Gastrocnemius medialis (tissue), 4 donors: ENCODE measurements at regions of chr3 and their contacts with region 1.

Region 1: GRCh38 chr3:127959846-127960245 is 44.8 kb downstream of the KBTBD12 start:
- DNase-seq: no peak
- ATAC-seq: no peak
- H3K4me3 ChIP-seq: no peak overlapping the region
- H3K27ac ChIP-seq: no peak overlapping the region
- H3K4me1 ChIP-seq: peaks cover 24 to 30% of the 10 kb centered on the region in 2 donors
- H3K27me3 ChIP-seq: no peaks in the 10 kb centered on the region
- CTCF ChIP-seq: no peak
- POLR2A ChIP-seq: no peak

Region 2: DNA sequence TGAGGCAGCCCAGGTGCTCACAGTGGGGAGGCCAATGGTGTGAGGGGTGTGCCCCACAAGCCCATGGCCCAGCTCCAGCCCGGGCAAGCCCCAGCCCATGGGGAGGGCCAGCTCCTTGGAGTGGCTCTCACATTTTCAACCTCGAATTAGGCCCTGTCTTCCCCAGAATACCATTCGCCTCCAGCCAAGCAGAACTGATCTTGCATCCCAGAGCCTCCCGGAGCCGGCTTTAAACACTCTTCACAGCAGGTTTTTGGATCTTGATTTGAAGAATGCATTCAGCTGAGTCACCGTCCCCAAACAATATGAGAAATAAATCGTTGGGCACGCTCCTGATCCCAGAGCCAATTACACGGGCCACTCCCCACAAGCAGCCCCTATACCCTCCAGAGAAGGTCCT is 393.0 kb before region 1 on chr3:
- in situ Hi-C with region 1: no loop called
- intact Hi-C with region 1: no loop called
- DNase-seq: no peak
- ATAC-seq: no peak
- H3K4me3 ChIP-seq: no peak overlapping the region
- H3K27ac ChIP-seq: no peak overlapping the region
- H3K4me1 ChIP-seq: no peaks in the 10 kb centered on the region
- H3K27me3 ChIP-seq: peaks cover 0 to 12% (median 0%) of the 10 kb centered on the region in 3 donors
- CTCF ChIP-seq: no peak
- POLR2A ChIP-seq: no peak

Region 3: DNA sequence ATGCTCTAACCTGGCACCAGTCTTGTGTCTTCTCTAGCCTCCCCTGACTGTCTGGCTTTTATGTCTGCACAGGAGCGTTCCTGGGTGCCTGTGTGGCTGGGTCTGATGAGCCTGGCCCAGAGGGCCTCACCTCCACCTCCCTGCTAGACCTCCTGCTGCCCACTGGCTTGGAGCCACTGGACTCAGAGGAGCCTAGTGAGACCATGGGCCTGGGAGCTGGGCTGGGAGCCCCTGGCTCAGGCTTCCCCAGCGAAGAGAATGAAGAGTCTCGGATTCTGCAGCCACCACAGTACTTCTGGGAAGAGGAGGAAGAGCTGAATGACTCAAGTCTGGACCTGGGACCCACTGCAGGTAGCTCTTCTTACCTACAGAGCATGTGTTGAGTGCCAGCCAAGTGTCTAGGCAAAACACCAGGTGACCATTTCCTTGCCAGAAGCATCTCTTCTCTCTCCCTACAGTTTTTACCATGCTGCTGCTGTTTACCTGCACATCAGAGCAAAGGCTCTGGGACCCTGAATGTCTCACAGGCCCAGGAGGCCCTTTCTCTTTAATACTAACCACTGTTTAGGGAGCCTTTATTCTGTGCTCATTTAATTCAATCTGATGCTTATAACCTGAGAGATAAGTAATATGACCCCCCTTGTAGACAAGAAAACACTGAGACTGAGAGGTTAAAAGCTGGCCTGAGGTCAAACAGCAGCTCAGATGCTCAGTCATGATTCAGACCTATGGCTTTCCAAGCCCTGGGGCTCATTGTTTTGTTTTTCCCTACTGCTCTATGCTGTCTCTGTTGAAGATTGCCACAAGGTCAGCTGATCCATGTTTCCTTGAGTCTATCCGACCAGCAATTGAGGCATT is 320.4 kb before region 1 on chr3:
- in situ Hi-C with region 1: loop called in 1 of 4 experiments (anchors 10 kb)
- intact Hi-C with region 1: no loop called
- DNase-seq: no peak
- ATAC-seq: no peak
- H3K4me3 ChIP-seq: no peak overlapping the region
- H3K27ac ChIP-seq: no peak overlapping the region
- H3K4me1 ChIP-seq: no peaks in the 10 kb centered on the region
- H3K27me3 ChIP-seq: no peaks in the 10 kb centered on the region
- CTCF ChIP-seq: no peak
- POLR2A ChIP-seq: no peak

Region 4: GRCh38 chr3:127652231-127652995 is 307.4 kb before region 1 on chr3:
- in situ Hi-C with region 1: loop called in 3 of 4 experiments (anchors 10 to 25 kb)
- intact Hi-C with region 1: no loop called
- DNase-seq: no peak
- ATAC-seq: peak; percentile 78 to 89
- H3K4me3 ChIP-seq: no peak overlapping the region
- H3K27ac ChIP-seq: no peak overlapping the region
- H3K4me1 ChIP-seq: peaks cover 0 to 5% of the 10 kb centered on the region in 2 donors
- H3K27me3 ChIP-seq: no peaks in the 10 kb centered on the region
- CTCF ChIP-seq: peak; percentile 87 to 97 (median 90)
- POLR2A ChIP-seq: no peak

Region 5: DNA sequence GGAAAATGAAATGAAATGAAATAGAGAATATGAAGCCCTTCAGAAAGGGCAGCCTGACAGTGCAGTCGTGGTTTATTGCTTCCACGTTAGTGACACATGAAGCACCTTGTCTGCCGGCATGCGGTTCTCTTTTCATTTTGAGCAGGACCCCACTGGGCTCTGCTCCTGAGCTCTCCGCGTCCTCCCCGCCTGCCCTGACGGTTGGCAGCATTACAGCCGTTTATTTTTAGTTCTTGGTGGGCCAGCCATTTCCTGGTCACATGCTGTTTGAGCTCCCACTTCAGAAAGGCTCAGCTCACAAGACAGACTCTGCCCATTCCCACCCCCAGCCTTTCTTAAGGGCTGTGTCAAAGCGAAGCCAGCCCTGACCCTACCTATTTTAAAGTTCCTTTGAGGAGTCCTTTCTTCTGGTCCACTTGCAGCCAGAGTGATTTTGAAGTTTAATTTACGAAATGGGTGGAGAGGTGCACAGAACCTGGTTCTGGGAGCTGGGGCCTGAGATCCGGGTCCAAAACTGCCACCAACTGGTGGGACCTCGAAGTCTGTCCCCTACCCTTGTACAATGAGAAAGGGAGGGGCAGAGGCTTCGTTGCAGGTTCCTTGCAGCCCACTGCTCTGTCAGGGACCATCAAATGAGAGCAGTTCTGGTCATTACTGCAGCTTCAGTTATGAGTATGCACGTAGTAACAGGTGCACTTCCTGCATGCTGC is 197.6 kb before region 1 on chr3:
- in situ Hi-C with region 1: no loop called
- intact Hi-C with region 1: loop called (anchors 10 kb)
- DNase-seq: peak in 1 of 2 donors; percentile 73
- ATAC-seq: peak; percentile 17 to 69
- H3K4me3 ChIP-seq: peak overlapping the region in 3 of 4 donors; percentile 24 to 39 (median 26)
- H3K27ac ChIP-seq: peak overlapping the region; percentile 73 to 78 (median 75)
- H3K4me1 ChIP-seq: peaks cover 42 to 52% of the 10 kb centered on the region in 2 donors
- H3K27me3 ChIP-seq: no peaks in the 10 kb centered on the region
- CTCF ChIP-seq: no peak
- POLR2A ChIP-seq: no peak